ENCODE measurements at regions of chr14 and their contacts with region 1.

Region 1: GRCh38 chr14:91418387-91419043 is 895 bp upstream of the CCDC88C start:
- DNase-seq: peak; percentile 66

Region 2: DNA sequence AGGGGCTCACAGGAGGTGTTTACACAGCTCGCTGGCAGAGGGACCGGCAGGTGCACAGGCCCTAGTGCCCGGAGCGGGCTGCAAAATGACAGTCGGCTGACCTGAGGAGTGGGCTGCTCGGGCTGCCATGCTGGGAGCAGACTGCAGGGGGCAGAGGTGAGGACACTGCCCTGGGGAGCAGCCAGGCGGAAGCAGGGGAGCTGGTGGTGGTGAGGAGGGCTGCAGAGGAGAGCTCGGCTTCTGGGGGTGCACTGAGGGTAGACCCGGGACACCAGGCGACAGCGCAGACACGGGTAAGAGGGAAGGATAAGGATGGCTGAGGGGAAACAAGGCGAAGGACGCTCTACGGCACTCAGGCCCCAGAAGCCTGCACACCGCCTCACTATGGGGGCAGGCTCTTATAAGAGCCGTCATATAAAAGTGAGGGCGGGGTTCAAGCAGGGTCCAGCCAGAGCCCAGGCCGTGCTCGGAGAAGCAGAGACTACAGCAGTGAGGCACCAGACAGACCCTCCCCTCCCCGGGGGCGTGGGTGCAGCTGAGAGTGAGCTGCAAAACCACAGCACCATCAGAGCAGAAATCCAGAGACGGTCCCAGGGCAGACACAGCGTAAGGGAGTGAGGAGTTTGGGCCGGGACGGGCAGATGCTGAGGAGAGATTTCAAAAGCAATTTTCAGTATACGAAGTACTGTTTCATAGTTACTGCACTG is 63.4 kb before region 1 on chr14:
- CTCF ChIA-PET with region 1: interaction called, 10 read pairs
- POLR2A ChIA-PET with region 1: interaction called, 9 read pairs
- DNase-seq: peak; percentile 49

Region 3: DNA sequence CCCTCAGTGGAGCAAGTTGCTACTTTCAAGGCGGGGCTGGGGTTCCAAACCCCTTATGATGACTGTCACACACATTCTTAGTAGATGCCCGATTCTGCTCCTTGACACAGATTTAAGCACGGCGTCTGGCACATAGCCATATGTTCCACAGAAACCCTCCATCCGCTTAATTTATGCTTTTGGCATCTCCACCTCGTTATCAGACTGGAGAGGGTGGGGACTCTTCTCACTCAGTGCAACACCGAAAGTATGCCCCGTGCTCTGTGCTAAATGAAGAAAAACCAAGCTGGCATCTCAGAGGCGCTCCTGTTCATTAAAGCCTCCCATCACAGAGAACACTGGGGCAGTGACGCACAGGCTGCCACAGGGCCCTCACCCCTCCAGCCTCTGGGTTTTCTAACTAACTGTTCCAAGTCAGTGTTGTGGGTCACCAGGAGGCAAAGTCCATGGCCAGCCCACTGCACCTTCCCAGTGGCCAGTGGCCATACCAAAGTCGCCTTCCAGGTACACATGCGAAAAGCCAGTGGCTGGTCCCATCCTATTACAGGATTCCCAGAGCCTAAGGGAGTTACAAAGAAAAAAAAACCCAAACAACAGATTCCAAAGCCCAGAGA is 28.2 kb before region 1 on chr14:
- CTCF ChIA-PET with region 1: no interaction called
- POLR2A ChIA-PET with region 1: no interaction called
- DNase-seq: no peak

Measured in HEK293T (cell line).